Heart right ventricle (tissue), 16 donors: ENCODE measurements at regions of chr12 and their contacts with region 1.

Region 1: DNA sequence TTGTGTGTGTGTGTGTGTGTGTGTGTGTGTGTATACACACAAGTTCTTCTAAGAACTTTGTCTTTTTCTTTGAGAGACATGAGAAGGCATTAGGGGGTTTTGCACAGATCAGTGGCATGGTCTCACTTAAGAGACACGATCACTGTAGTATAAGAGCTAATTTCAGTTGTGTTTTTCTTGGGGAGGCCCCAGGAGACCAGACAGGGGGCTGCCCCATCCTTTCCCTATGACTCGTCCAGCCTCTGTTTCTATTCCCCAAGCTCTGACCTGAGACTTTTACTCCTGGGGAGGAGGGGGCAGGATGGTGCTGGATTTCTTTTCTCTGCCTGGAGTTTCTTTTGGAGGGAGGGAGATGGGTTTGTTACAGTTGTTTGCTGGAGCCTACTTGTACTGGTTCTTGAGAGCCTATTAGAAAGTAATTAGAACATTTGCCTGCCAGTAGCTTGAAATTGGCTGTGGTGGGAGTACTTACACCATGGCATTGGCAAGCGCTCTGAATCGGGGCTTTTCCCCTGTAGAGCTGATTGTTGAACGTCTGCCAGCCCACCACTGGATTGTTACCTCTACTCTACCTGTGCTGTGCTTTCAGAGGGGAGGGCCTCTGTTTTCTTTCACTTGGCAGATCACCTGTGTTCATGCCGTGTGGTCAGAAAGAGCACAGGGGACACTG is 109.5 kb downstream of the TSPAN9 start:
- DNase-seq: no peak
- ATAC-seq: no peak
- H3K4me3 ChIP-seq: no peak overlapping the region
- H3K27ac ChIP-seq: peak overlapping the region in 6 of 10 donors; percentile 79 to 94 (median 86)
- H3K4me1 ChIP-seq: peaks cover 4 to 71% (median 60%) of the 10 kb centered on the region in 9 donors
- H3K27me3 ChIP-seq: no peaks in the 10 kb centered on the region
- CTCF ChIP-seq: no peak

Region 2: DNA sequence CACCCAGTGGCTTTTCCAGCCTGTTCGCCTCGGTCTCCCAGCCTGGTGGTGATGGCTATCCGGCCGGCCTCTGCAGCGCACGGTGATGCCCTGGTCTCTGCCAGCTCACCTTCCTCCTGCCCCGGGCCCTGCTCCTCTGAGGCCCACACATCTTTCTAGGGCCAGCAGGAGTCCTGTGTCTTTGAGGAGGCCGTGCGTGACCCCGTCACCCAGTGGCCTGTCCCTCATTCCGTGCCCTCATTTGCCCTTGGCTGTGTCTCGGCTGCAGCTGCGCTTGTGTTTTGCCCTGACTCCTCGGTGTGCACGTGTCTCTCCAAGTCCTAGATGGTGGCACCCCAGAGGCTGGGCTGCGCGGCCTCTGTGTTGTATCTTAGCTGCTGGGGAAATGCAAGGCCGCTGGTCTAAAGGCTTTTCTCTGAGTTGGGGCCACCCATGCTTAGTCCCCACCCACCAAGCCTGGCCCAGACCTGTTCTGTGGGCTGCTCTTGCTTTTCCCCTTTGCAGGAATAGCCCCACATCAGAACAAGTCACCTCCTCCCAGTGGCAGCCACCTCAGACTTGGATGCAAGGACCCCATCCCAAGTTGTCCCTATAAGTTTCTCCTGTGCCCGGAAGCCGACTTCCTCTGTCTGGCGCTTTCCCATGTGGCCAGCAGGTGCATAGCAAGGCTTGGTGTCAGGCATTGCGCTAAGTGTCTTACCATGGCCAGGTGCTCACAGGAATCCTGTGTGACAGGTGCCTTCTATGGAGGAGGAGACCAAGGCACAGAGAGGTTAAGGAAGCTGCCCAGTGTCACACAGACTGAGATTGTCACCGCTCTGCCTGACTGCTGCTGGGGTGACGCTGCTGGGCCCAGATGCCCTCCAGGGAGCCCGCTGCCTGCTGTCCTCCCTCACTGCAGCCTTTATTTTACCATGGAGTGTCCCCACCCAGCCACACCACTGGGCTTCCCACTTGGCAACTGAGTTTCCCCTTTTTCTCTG is 45.1 kb before region 1 on chr12:
- intact Hi-C with region 1: loop called in 1 of 10 experiments (anchors 5 kb)
- DNase-seq: peak in 1 of 2 donors; percentile 44
- ATAC-seq: peak in 7 of 8 donors; percentile 7 to 27 (median 15)
- H3K4me3 ChIP-seq: no peak overlapping the region
- H3K27ac ChIP-seq: peak overlapping the region in 8 of 10 donors; percentile 43 to 68 (median 61)
- H3K4me1 ChIP-seq: peaks cover 25 to 82% (median 65%) of the 10 kb centered on the region in 9 donors
- H3K27me3 ChIP-seq: no peaks in the 10 kb centered on the region
- CTCF ChIP-seq: no peak

Region 3: GRCh38 chr12:3150931-3151835 is 35.5 kb before region 1 on chr12:
- intact Hi-C with region 1: loop called in 2 of 10 experiments (anchors 5 kb)
- DNase-seq: no peak
- ATAC-seq: peak in 7 of 8 donors; percentile 3 to 51 (median 37)
- H3K4me3 ChIP-seq: peak overlapping the region in 3 of 10 donors; percentile 5 to 20 (median 18)
- H3K27ac ChIP-seq: peak overlapping the region in 9 of 10 donors; percentile 21 to 78 (median 43)
- H3K4me1 ChIP-seq: peaks cover 52 to 92% (median 73%) of the 10 kb centered on the region in 9 donors
- H3K27me3 ChIP-seq: no peaks in the 10 kb centered on the region
- CTCF ChIP-seq: no peak

Region 4: DNA sequence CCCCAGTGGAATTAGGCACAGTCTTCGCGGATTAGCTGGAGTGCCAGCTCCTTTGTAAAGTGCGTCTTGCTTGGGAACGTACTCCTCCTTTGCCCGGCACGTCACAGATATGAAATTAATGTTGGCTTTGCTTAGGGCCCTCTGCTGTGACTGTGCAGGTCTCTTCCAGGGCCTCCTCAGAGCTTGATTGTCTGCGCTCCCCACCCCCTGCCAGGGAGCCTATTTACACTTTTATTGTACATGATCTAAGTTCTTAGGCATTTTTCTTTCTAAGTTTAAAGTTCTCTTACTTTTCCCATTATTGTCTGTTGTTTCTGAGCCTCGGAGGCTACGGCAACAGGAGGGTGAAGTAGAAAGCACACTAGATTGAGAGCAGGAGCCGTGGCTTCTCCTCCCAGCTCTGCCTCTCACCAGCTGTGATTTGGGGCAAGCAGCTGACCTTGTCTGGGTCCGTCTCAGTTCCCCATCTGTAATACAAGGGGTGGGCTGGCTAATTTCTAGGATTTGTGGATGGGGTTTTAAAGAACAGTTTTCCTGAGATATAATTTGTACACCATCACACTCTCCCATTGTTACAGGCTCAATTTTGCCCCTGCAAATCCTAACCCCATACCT is 27.7 kb before region 1 on chr12:
- intact Hi-C with region 1: loop called in 2 of 10 experiments (anchors 5 kb)
- DNase-seq: no peak
- ATAC-seq: peak in 7 of 8 donors; percentile 15 to 50 (median 44)
- H3K4me3 ChIP-seq: no peak overlapping the region
- H3K27ac ChIP-seq: peak overlapping the region in 7 of 10 donors; percentile 2 to 57 (median 17)
- H3K4me1 ChIP-seq: peaks cover 8 to 71% (median 35%) of the 10 kb centered on the region in 9 donors
- H3K27me3 ChIP-seq: no peaks in the 10 kb centered on the region
- CTCF ChIP-seq: no peak